Left cardiac atrium (tissue), 4 donors: ENCODE measurements at regions of chr17 and their contacts with region 1.

Region 1: DNA sequence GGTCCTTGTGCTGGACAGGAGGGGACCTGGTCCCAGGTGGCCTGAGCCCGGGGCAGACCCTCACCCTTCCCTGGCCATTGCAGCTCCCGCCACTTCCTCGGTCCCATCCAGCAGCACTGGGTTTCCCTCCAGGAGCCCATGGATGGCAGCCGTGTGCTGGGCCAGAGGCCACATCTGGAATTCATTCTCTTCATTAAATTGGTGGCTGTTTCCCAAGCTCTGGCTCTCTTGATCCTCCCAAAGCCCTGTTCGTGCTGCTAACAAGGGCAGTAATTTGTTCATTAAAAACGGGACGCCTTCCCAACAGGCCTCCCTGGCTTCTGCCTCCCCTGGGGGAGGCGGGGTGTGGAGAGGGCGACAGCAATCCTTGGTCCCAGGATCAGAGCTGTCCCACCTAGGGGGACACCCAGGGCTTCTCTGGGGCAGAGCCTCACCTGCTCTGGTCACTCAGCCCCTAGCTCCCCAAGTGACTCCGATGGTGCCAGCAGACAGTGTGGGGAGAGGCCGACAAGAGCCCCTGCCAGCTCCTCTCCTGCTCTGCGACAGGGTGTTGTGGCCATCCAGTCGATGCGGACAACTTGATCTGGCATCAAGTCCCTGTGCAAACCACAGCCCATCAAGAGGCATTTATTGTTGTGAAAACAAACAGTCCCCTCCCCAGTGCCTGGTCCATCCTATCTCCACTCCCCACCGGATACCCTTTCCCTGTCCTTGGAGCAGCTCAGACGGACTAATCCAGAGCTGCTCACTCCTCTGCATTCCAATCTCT is 44.0 kb downstream of the SDK2 start:
- DNase-seq: no peak
- ATAC-seq: no peak

Region 2: DNA sequence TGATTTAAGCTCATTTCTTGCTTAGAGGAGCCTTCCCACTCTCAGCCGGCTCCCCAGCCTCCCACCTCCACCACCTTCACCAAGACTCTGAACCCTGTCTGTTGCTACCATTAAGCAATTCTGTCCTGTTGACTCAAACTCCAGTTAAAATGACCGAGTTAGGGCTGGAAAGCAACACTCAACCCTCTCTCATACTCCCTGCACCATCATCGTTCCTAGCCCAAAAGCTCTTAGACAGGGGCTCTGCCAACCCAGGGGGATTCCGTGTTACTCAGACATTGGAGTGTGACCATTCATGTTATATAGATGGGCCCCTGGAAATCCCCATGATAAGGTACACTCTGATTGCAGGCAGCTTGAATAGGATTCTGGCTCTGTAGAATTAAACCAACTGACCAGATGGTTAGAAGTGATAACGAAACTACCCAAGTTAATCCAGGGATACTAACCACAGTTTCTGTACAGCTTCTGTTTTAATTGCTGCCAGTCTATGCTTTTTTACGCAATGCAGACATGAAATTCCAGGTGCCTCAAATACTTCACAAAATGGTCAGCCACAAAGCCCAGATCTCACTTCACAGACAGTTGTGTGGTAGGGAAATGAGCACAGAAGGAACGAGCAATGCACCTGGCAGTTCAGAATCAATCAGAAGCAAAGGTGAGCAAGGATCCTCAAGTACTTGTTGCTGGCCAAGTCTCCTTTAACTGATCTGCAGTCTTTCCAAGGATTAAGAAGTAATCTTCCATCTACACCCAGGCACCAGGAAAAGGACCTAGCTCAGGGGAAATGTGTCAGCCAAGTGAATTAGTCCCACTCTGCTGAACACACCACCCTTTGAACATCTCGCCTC is 433.3 kb before region 1 on chr17:
- intact Hi-C with region 1: loop called in 1 of 2 experiments (anchors 10 kb)
- DNase-seq: no peak
- ATAC-seq: no peak

Region 3: GRCh38 chr17:73536700-73537605 is 63.3 kb before region 1 on chr17:
- intact Hi-C with region 1: no loop called
- DNase-seq: no peak
- ATAC-seq: no peak